GM10248 (cell line): ENCODE measurements at regions of chr11 and their contacts with region 1.

Region 1: GRCh38 chr11:87421422-87421821 is 383.7 kb downstream of the TMEM135 start:
- DNase-seq: peak; percentile 53
- CTCF ChIP-seq: peak; percentile 70

Region 2: DNA sequence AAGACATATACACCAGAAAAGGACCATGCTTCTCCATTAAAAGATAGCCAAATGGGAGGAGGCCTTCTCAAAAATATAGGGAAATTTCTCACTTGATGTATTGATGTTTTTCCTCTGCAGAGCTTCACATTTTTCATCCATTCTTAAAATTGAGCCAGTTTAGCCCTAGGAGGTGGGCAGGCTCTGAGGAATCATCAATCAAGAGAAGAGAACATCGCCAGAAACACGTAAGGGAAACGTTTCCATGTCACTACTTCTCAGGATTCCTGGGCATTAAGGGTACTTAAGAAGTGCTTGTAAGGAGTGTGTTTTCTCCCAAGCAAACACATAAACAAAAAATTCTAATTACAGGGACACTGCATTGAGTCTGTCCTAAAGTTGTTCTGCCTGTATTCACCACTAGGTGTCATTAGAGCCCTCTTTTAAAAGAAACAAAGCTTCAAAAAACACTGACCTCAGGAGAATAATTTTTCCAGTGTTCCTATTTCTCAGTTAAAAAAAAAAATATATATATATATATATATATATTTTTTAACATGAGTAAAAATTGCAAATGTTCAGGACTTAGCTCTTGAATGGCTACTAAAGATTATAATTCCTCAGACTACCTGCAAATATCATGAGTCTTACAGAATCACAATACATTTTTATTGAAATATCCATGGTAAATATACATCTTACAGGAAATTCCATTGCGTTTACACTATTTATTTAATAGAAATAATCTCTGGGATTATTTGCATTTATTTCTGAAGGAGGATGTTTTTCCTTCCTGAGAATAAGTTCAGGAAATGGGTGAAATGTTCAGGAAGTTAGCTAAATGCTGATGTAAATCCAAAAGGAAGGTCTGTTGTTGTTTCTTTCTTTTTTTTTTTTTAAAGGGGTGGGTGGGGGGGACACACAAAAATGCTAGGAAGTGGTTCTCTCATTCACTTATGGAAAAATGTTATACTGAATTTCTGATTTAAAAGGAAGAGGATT is 482.2 kb before region 1 on chr11:
- CTCF ChIA-PET with region 1: interaction called, 21 read pairs
- POLR2A ChIA-PET with region 1: no interaction called
- DNase-seq: peak; percentile 38
- CTCF ChIP-seq: peak; percentile 76

Region 3: DNA sequence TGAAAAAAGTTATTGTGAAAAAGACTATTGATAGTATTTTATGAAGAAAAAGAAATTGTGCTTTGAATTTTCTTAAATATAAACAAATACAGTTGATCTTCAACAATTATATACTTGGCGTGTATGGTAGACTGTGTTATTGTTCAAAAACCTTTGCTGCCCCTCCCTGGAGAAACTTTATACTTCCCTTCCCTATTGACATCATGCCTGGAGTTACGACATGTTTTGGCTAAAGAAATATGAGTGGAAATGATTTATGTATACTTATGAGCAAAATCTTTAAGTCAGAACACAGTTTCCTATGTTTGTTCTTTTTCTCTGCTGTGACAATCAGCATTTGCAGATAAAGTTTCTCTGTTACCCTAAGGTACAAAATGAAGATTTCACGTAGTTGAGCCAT is 139.9 kb before region 1 on chr11:
- CTCF ChIA-PET with region 1: no interaction called
- POLR2A ChIA-PET with region 1: no interaction called
- DNase-seq: no peak
- CTCF ChIP-seq: no peak

Region 4: GRCh38 chr11:87352759-87353707 is 68.4 kb before region 1 on chr11:
- CTCF ChIA-PET with region 1: interaction called, 121 read pairs
- POLR2A ChIA-PET with region 1: no interaction called
- DNase-seq: peak; percentile 82
- CTCF ChIP-seq: peak; percentile 97

Region 5: GRCh38 chr11:87359401-87359800 is 62.0 kb before region 1 on chr11:
- CTCF ChIA-PET with region 1: interaction called, 121 read pairs
- POLR2A ChIA-PET with region 1: no interaction called
- DNase-seq: no peak
- CTCF ChIP-seq: no peak

Region 6: DNA sequence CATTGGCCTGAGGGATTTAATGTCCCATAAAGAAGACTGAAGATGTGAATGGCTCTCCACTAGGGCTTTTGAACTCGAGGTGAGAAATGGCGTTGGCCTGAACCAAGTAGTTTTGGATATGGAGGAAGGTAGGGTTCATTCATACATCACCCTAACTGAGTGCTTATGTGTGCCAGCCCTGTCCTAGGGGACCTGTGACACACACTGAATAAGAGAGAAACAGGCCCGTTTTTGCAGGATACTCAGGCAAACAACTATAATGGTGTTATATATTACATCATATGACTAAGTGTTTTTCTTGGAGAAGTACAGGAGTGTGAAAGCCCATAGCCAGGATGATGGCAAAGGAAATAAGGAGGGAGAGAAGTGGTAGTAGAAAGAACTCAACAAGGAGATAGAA is 15.6 kb before region 1 on chr11:
- CTCF ChIA-PET with region 1: interaction called, 55 read pairs
- POLR2A ChIA-PET with region 1: no interaction called
- DNase-seq: no peak
- CTCF ChIP-seq: no peak

Region 7: DNA sequence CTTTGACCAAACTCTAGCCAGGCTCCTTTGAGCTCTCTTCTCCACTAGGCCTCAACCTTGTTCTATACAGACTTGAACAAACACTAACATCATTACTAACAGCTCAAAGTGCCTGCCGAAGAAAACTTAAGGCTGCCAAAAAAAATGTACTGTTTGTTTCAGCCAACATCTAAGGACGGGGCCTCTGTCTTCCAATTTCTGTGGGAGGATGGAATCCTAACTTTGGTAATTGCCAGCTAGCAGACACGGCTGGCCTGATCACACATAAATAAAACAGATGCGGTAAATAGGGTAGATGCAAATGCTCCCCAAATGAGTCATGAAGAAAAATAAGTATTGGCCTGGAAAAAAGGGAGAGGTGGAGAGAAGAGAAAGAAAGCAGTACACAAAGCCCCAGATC is 10.6 kb after region 1 on chr11:
- CTCF ChIA-PET with region 1: interaction called, 11 read pairs
- POLR2A ChIA-PET with region 1: no interaction called
- DNase-seq: no peak
- CTCF ChIP-seq: no peak

Region 8: DNA sequence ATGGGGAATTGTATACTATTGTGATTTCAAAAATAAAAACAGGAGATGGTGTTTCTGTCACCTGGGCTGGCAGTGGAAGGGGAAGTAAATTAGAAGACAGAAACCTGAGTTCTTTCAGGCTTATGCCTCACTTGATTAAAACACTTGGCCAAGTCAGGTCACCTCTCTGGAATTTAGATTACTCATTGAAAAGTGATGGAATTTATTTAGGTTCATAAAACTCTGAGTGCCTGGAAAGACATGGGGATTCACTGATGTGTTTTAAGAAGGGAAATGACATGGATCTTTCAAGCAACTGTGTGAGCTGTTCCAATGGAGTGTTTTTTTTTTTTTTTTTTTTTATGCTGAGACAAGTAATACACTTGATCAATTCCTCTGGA is 16.4 kb after region 1 on chr11:
- CTCF ChIA-PET with region 1: interaction called, 11 read pairs
- POLR2A ChIA-PET with region 1: no interaction called
- DNase-seq: no peak
- CTCF ChIP-seq: no peak